ENCODE measurements at regions of chr10 and their contacts with region 1.

Region 1: GRCh38 chr10:103845972-103846371 is 9.4 kb downstream of the SH3PXD2A start:
- DNase-seq: peak; percentile 34
- H3K4me3 ChIP-seq: no peak overlapping the region
- H3K27ac ChIP-seq: peak overlapping the region; percentile 23
- H3K4me1 ChIP-seq: peaks cover 28% of the 10 kb centered on the region
- H3K27me3 ChIP-seq: no peaks in the 10 kb centered on the region
- CTCF ChIP-seq: no peak
- POLR2A ChIP-seq: no peak

Region 2: GRCh38 chr10:103765981-103766380 is 80.0 kb before region 1 on chr10:
- CTCF ChIA-PET with region 1: interaction called, 8 read pairs
- POLR2A ChIA-PET with region 1: interaction called, 12 read pairs
- dilution Hi-C with region 1: no loop called
- intact Hi-C with region 1: no loop called
- DNase-seq: no peak
- H3K4me3 ChIP-seq: no peak overlapping the region
- H3K27ac ChIP-seq: peak overlapping the region; percentile 79
- H3K4me1 ChIP-seq: peaks cover 45% of the 10 kb centered on the region
- H3K27me3 ChIP-seq: no peaks in the 10 kb centered on the region
- CTCF ChIP-seq: no peak
- POLR2A ChIP-seq: no peak

Region 3: DNA sequence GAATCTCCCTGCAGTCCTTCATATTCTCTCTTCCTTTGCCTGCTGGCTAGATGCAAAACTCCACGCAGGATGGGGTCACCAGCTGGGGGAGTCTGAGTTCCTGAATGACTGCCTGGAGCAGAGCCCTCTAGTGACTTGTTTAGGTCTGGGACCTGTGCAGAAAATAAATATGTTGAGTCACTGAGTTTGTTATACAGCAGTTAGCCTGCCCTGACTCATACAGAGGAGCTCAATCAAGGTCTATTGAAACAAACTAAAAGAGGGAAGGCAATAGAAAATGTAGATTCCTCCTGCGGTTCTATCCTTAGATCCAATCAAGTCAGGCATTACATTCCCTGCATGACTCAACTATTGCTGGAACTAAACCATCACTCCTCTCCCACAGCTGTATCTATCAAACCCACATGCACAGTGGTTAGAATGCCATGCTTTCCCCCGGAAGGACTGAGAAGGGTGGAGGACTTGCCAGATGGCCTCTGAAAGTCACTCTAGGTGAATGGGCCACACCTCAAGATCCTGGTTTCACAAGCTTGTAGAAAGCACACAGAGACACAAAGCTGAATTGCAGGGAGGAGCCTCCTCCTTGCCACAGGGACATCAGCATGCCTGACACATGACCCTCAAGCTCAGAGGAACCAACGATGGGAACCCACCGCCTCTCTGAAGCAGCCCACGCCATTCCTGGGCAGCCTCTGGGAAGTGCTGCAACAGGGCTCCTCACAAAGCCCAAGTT is 64.5 kb before region 1 on chr10:
- CTCF ChIA-PET with region 1: interaction called, 10 read pairs
- POLR2A ChIA-PET with region 1: no interaction called
- dilution Hi-C with region 1: no loop called
- intact Hi-C with region 1: no loop called
- DNase-seq: peak; percentile 22
- H3K4me3 ChIP-seq: no peak overlapping the region
- H3K27ac ChIP-seq: no peak overlapping the region
- H3K4me1 ChIP-seq: no peaks in the 10 kb centered on the region
- H3K27me3 ChIP-seq: no peaks in the 10 kb centered on the region
- CTCF ChIP-seq: peak; percentile 12 to 21
- POLR2A ChIP-seq: no peak